B cell (primary cell): ENCODE measurements at regions of chr9 and their contacts with region 1.

Region 1: GRCh38 chr9:83754383-83754977 is 46.7 kb upstream of the UBQLN1 start:
- DNase-seq: peak; percentile 29
- ATAC-seq: peak; percentile 28
- H3K4me3 ChIP-seq: no peak overlapping the region
- H3K4me3 Mint-ChIP-seq: no peak overlapping the region
- H3K27ac ChIP-seq: peak overlapping the region in 1 of 2 donors; percentile 7
- H3K27ac Mint-ChIP-seq: no peak overlapping the region
- H3K4me1 ChIP-seq: peaks cover 3 to 6% of the 10 kb centered on the region in 2 donors
- H3K4me1 Mint-ChIP-seq: peaks cover 4% of the 10 kb centered on the region
- H3K27me3 ChIP-seq: no peaks in the 10 kb centered on the region
- H3K27me3 Mint-ChIP-seq: no peaks in the 10 kb centered on the region
- CTCF ChIP-seq: no peak

Region 2: GRCh38 chr9:83733739-83734138 is 20.7 kb before region 1 on chr9:
- CTCF ChIA-PET with region 1: no interaction called
- POLR2A ChIA-PET with region 1: no interaction called
- intact Hi-C with region 1: loop called (anchors 2 kb)
- DNase-seq: no peak
- ATAC-seq: no peak
- H3K4me3 ChIP-seq: no peak overlapping the region
- H3K4me3 Mint-ChIP-seq: no peak overlapping the region
- H3K27ac ChIP-seq: no peak overlapping the region
- H3K27ac Mint-ChIP-seq: no peak overlapping the region
- H3K4me1 ChIP-seq: no peaks in the 10 kb centered on the region
- H3K4me1 Mint-ChIP-seq: no peaks in the 10 kb centered on the region
- H3K27me3 ChIP-seq: no peaks in the 10 kb centered on the region
- H3K27me3 Mint-ChIP-seq: no peaks in the 10 kb centered on the region
- CTCF ChIP-seq: no peak

Region 3: GRCh38 chr9:84024041-84024575 is 269.6 kb after region 1 on chr9:
- CTCF ChIA-PET with region 1: no interaction called
- POLR2A ChIA-PET with region 1: no interaction called
- intact Hi-C with region 1: no loop called
- DNase-seq: no peak
- ATAC-seq: no peak
- H3K4me3 ChIP-seq: no peak overlapping the region
- H3K4me3 Mint-ChIP-seq: no peak overlapping the region
- H3K27ac ChIP-seq: no peak overlapping the region
- H3K27ac Mint-ChIP-seq: no peak overlapping the region
- H3K4me1 ChIP-seq: no peaks in the 10 kb centered on the region
- H3K4me1 Mint-ChIP-seq: no peaks in the 10 kb centered on the region
- H3K27me3 ChIP-seq: peaks cover 0 to 4% (median under 1%) of the 10 kb centered on the region in 4 experiments
- H3K27me3 Mint-ChIP-seq: peaks cover 9% of the 10 kb centered on the region
- CTCF ChIP-seq: no peak